Right cardiac atrium (tissue), 5 donors: ENCODE measurements at regions of chr5 and their contacts with region 1.

Region 1: GRCh38 chr5:142548739-142549275 is 137.1 kb downstream of the FGF1 start:
- DNase-seq: peak in 2 of 3 donors; percentile 37 to 66
- ATAC-seq: peak; percentile 87 to 89
- H3K4me3 ChIP-seq: no peak overlapping the region
- H3K27ac ChIP-seq: no peak overlapping the region
- H3K4me1 ChIP-seq: peaks cover 3% of the 10 kb centered on the region
- H3K27me3 ChIP-seq: no peaks in the 10 kb centered on the region

Region 2: GRCh38 chr5:142151436-142152383 is 397.1 kb before region 1 on chr5:
- intact Hi-C with region 1: loop called in 2 of 4 experiments (anchors 2 to 5 kb)
- DNase-seq: peak in 1 of 3 donors; percentile 71
- ATAC-seq: peak; percentile 65 to 74
- H3K4me3 ChIP-seq: no peak overlapping the region
- H3K27ac ChIP-seq: no peak overlapping the region
- H3K4me1 ChIP-seq: no peaks in the 10 kb centered on the region
- H3K27me3 ChIP-seq: no peaks in the 10 kb centered on the region

Region 3: DNA sequence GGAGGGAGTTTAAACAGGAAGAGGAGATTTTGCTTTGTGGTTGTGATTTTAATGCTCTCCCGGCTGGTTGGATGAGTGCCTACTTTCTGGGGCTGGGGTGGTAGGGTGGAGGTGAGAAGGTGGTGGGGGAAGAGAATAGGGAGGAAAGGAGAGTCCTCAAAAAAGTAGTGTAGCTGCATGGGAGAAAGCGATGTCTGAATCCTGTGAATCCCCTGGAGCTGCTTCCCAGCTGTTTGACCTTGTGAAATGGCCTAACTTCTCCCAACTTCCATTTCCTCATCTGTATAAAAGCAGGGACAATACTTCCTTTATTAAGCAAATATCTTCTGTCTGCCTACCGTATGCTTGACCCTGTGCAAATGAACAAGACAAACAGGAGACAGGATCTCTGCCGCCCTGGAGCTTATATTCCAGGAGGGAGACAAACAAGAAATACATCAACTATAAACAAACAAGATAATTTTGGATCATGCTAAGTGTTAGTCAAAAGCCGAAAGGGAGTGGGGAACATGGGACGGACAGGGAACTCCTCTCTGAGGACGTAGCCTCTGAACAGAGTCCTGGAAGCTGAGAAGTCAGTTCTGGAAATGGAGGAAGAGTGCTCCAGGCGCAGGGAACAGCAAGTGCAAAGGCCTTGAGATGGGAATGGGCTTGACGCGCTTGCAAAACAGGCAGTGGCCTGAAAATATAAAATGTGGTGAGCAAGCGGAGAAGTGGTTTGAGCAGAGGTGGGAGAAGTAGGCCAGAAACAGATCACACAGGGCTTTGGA is 327.5 kb before region 1 on chr5:
- intact Hi-C with region 1: no loop called
- DNase-seq: no peak
- ATAC-seq: no peak
- H3K4me3 ChIP-seq: no peak overlapping the region
- H3K27ac ChIP-seq: peak overlapping the region; percentile 30
- H3K4me1 ChIP-seq: peaks cover 11% of the 10 kb centered on the region
- H3K27me3 ChIP-seq: no peaks in the 10 kb centered on the region

Region 4: DNA sequence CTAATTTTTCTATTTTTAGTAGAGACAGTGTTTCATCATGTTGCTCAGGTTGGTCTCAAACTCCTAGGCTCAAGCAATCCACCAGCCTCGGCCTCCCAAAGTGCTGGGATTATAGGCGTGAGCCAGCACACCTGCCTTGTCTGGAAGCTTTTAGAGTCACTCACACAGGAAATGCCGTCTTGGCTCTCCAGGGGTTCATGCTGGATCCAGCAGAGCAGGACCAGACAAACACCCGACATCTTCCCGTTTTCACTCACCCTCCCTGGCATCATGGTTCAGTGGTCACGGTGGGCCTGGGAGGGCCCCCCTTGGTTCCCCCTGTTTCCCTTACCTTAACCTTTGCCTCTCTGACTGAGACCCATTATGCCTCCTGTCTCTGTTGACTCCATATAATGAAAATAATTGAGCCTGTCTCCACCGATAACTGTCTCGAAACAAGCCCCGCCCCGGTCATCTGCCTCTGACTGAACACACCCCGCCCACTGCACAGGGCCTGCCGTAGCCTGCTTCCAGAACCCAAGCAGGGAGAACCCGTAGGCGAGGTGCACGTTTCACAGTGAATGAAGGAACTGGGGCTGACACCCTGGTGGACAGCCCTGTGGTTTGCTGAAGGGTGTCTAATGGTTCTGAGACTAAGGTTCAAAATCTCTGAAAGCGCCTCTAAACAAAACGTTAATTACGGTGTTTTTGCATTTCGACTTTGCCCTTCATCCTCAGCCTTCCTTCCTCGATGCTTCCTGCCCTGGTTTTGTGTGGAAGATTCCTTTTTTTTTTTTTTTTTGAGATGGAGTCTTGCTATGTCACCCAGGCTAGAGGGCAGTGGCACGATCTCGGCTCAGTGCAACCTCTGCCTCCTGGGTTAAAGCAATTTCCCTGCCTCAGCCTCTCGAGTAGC is 184.3 kb before region 1 on chr5:
- intact Hi-C with region 1: loop called in 1 of 4 experiments (anchors 10 kb)
- DNase-seq: peak; percentile 34 to 78 (median 76)
- ATAC-seq: peak in 1 of 2 donors; percentile 38
- H3K4me3 ChIP-seq: no peak overlapping the region
- H3K27ac ChIP-seq: peak overlapping the region; percentile 43
- H3K4me1 ChIP-seq: peaks cover 2% of the 10 kb centered on the region
- H3K27me3 ChIP-seq: no peaks in the 10 kb centered on the region

Region 5: DNA sequence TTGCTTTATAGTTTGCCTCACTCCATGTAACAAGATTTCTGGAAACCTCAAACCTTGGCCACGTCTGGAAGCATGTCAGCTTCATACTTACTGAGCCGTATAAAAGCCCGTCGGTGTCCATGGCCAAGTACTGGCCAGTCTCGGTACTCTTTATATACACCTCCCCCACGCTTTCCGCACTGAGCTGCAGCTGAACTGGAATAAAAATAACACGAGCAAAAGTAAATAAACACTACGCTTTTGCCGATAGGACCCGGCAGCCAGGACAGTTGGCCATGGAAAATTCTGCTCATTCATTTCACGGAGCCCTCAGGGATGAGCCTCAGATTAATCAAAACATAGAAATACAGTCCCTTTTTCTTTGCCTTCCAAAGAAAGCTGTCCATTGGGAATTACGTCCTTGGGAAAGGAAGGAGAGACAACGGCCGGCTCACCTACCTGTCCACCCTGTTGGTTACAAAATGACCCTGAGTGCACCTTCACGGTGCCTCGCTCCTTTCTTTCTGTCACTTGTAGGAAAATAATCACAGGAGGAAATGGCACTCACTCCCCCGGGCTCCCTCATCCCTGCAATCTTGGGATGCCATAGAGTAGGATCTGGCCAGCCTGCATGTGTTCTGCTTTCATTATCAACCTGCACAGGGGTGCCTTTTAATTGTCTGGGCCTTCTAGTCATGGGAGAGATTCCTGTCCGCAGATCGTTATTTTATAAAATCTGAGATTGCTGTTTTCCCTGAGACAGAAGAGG is 52.0 kb after region 1 on chr5:
- intact Hi-C with region 1: no loop called
- DNase-seq: peak; percentile 55 to 83 (median 69)
- ATAC-seq: peak; percentile 87 to 91
- H3K4me3 ChIP-seq: no peak overlapping the region
- H3K27ac ChIP-seq: peak overlapping the region; percentile 21
- H3K4me1 ChIP-seq: peaks cover 6% of the 10 kb centered on the region
- H3K27me3 ChIP-seq: no peaks in the 10 kb centered on the region

Region 6: GRCh38 chr5:142674531-142675469 is 126.0 kb after region 1 on chr5:
- intact Hi-C with region 1: no loop called
- DNase-seq: peak; percentile 56 to 69 (median 58)
- ATAC-seq: peak; percentile 78 to 93
- H3K4me3 ChIP-seq: no peak overlapping the region
- H3K27ac ChIP-seq: peak overlapping the region; percentile 88
- H3K4me1 ChIP-seq: peaks cover 19% of the 10 kb centered on the region
- H3K27me3 ChIP-seq: no peaks in the 10 kb centered on the region